Prostate gland (tissue), 2 donors: ENCODE measurements at regions of chr16 and their contacts with region 1.

Region 1: GRCh38 chr16:55465077-55465896 is 13.7 kb upstream of the MMP2 start:
- DNase-seq: peak; percentile 88
- H3K4me3 ChIP-seq: no peak overlapping the region
- H3K27ac ChIP-seq: no peak overlapping the region
- H3K4me1 ChIP-seq: no peaks in the 10 kb centered on the region
- H3K27me3 ChIP-seq: no peaks in the 10 kb centered on the region
- CTCF ChIP-seq: peak; percentile 99 to 100 (median 100)
- POLR2A ChIP-seq: no peak

Region 2: DNA sequence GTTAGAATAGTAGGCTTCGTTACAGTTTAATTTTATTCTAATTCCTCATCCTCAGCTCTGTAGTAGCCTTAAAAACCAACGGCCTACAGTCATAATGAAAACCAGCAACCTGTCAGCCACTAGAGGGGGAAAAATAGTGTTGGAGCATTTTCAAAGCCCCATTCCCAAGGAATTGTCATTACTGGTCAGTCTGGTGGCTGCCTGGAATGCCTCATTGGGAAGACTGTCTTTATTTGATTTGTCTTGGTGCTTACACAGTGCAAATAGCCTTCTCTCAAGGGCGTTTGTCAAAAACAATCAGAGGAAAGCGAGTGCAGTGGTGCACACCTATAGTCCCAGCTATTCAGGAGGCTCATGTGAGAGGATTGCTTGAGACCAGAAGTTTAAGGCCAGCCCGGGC is 48.3 kb after region 1 on chr16:
- intact Hi-C with region 1: no loop called
- DNase-seq: no peak
- H3K4me3 ChIP-seq: no peak overlapping the region
- H3K27ac ChIP-seq: no peak overlapping the region
- H3K4me1 ChIP-seq: no peaks in the 10 kb centered on the region
- H3K27me3 ChIP-seq: no peaks in the 10 kb centered on the region
- CTCF ChIP-seq: no peak
- POLR2A ChIP-seq: no peak

Region 3: GRCh38 chr16:55543472-55543871 is 78.2 kb after region 1 on chr16:
- intact Hi-C with region 1: loop called (anchors 1 kb)
- DNase-seq: no peak
- H3K4me3 ChIP-seq: no peak overlapping the region
- H3K27ac ChIP-seq: no peak overlapping the region
- H3K4me1 ChIP-seq: no peaks in the 10 kb centered on the region
- H3K27me3 ChIP-seq: no peaks in the 10 kb centered on the region
- CTCF ChIP-seq: peak in 3 of 4 experiments; percentile 28 to 57 (median 43)
- POLR2A ChIP-seq: no peak

Region 4: DNA sequence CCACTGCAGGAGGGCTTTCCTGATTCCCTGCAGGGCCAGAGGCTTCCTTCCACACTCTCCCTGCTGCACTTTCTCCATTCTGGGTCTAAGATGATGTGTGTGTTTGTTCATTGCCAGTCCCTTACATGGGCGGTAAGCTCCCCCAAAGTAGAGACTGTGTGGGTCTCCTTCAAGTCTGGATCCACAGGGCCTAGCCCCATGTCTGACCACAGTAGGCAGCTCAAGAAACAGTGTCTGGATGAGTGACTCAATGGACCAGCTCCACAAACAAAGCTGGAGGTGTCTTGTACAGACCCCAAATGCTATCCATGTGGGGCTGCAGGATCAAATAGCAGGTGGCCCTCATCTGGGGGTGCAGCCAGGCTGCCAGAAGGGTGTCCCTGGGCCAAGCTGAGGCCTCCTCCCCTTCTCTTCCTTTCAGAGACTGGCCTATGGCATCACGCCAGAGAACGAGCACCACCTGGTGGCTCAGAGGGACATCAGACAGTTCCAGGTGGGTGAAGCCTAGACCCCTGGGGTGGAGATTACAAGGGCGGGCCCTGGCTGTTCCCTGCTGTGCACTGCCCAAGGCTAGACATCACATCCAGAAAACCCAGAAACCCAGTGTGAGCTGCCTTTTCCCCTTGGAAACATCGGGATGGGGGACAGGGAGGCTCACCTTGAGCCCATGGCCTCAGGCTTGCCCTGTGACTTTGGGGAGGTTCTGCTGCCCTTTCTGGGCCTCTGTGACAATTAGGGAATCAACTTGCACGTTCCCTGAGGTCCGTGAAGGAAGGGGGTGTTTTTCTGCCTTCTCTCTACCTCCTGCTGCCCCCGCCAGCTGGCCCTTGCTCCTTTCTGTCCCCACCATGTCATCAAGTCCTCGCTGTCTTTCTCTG is 236.4 kb after region 1 on chr16:
- intact Hi-C with region 1: loop called (anchors 2 kb)
- DNase-seq: peak; percentile 32
- H3K4me3 ChIP-seq: no peak overlapping the region
- H3K27ac ChIP-seq: no peak overlapping the region
- H3K4me1 ChIP-seq: no peaks in the 10 kb centered on the region
- H3K27me3 ChIP-seq: peaks cover 5% of the 10 kb centered on the region
- CTCF ChIP-seq: peak in 3 of 4 experiments; percentile 57 to 75 (median 60)
- POLR2A ChIP-seq: no peak

Region 5: GRCh38 chr16:55842369-55843104 is 377.2 kb after region 1 on chr16:
- intact Hi-C with region 1: loop called (anchors 5 kb)
- DNase-seq: peak; percentile 22
- H3K4me3 ChIP-seq: no peak overlapping the region
- H3K27ac ChIP-seq: no peak overlapping the region
- H3K4me1 ChIP-seq: no peaks in the 10 kb centered on the region
- H3K27me3 ChIP-seq: no peaks in the 10 kb centered on the region
- CTCF ChIP-seq: peak; percentile 30 to 78 (median 72)
- POLR2A ChIP-seq: no peak